ENCODE measurements at regions of chr22 and their contacts with region 1.

Region 1: DNA sequence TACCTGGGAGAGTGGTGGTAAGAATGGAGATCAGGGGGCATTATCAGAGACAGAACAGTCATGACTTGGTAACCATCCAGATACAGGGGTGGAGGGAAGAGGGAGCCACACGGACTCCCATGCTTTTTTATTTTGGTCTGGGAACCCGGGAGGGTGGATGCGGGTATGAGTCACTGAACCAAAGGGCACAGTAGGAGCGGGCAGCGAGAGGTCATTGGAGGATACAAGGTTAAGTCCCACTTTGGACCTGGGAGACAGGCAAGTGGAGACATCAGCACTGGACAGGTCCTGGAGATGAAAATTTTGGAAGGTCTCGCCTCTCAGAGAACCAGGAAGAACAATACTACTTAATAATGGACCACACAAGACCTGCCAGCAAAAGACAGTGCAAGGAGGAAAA is 6.7 kb downstream of the HDHD5 start:
- DNase-seq: no peak
- ATAC-seq: no peak
- H3K4me3 ChIP-seq: no peak overlapping the region
- H3K27ac ChIP-seq: no peak overlapping the region
- H3K4me1 ChIP-seq: peaks cover 3 to 15% of the 10 kb centered on the region in 2 experiments; a peak in 3 of 4 replicates
- H3K27me3 ChIP-seq: no peaks in the 10 kb centered on the region
- CTCF ChIP-seq: no peak
- POLR2A ChIP-seq: no peak
- RAD21 ChIP-seq: no peak

Region 2: DNA sequence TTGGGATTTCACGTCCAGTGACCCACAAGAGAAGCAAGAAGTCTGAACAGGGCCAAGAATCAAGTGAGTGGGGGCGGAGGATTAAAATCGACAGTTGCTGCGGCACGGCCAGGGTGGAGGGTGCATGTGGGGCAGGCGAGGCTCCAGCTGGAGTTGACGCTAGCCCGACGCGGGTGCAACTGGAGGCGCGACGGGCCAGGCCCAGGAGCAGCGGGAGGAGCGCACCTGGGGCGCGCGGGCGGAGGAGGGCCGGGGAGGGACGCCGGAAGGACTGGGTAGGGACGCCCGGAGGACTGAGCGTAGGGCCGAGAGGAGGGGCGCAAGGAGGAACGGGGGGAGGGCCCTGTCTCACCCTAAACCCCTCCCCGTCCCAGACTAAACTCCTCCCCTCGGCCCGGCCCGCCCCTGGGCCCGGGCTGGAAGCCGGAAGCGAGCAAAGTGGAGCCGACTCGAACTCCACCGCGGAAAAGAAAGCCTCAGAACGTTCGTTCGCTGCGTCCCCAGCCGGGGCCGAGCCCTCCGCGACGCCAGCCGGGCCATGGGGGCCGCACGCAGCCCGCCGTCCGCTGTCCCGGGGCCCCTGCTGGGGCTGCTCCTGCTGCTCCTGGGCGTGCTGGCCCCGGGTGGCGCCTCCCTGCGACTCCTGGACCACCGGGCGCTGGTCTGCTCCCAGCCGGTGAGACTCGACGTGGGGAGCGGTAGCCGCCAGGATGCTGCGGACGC is 67.6 kb before region 1 on chr22 and contains the start of gene IL17RA:
- CTCF ChIA-PET with region 1: no interaction called
- POLR2A ChIA-PET with region 1: no interaction called
- RAD21 ChIA-PET with region 1: no interaction called
- intact Hi-C with region 1: loop called (anchors 5 kb)
- DNase-seq: peak; percentile 66
- ATAC-seq: peak; percentile 98
- H3K4me3 ChIP-seq: peak within 1 kb of the TSS; percentile 77 to 91
- H3K27ac ChIP-seq: peak within 1 kb of the TSS; percentile 93
- H3K4me1 ChIP-seq: peaks cover 10 to 20% of the 10 kb centered on the region in 2 experiments; a peak in 3 of 4 replicates
- H3K27me3 ChIP-seq: no peaks in the 10 kb centered on the region
- CTCF ChIP-seq: no peak
- POLR2A ChIP-seq: peak; percentile 73
- RAD21 ChIP-seq: no peak
- total RNA-seq, gene IL17RA: 17.3 TPM

Region 3: GRCh38 chr22:17095538-17095937 is 56.8 kb before region 1 on chr22:
- CTCF ChIA-PET with region 1: no interaction called
- POLR2A ChIA-PET with region 1: no interaction called
- RAD21 ChIA-PET with region 1: no interaction called
- intact Hi-C with region 1: loop called (anchors 5 kb)
- DNase-seq: no peak
- ATAC-seq: peak; percentile 85
- H3K4me3 ChIP-seq: no peak overlapping the region
- H3K27ac ChIP-seq: no peak overlapping the region
- H3K4me1 ChIP-seq: no peaks in the 10 kb centered on the region
- H3K27me3 ChIP-seq: no peaks in the 10 kb centered on the region
- CTCF ChIP-seq: peak in 2 of 3 experiments; percentile 58 to 64; a peak in 4 of 6 replicates
- POLR2A ChIP-seq: no peak
- RAD21 ChIP-seq: no peak

Region 4: GRCh38 chr22:17201285-17201945 is 49.1 kb after region 1 on chr22:
- CTCF ChIA-PET with region 1: no interaction called
- POLR2A ChIA-PET with region 1: no interaction called
- RAD21 ChIA-PET with region 1: no interaction called
- intact Hi-C with region 1: no loop called
- DNase-seq: no peak
- ATAC-seq: peak; percentile 49
- H3K4me3 ChIP-seq: no peak overlapping the region
- H3K27ac ChIP-seq: no peak overlapping the region
- H3K4me1 ChIP-seq: no peaks in the 10 kb centered on the region
- H3K27me3 ChIP-seq: no peaks in the 10 kb centered on the region
- CTCF ChIP-seq: peak; percentile 17 to 38 (median 28); a peak in 4 of 6 replicates
- POLR2A ChIP-seq: no peak
- RAD21 ChIP-seq: no peak

Measured in HCT116 (cell line).